Activated CD8-positive, alpha-beta T cell treated with anti-CD3 and anti-CD28 coated beads for 36 hours (primary cell): ENCODE measurements at regions of chr4 and their contacts with region 1.

Region 1: GRCh38 chr4:74858929-74859562 is 64.7 kb upstream of the BTC start:
- DNase-seq: no peak
- ATAC-seq: no peak
- H3K4me3 Mint-ChIP-seq: no peak overlapping the region
- H3K27ac Mint-ChIP-seq: no peak overlapping the region
- H3K4me1 Mint-ChIP-seq: no peaks in the 10 kb centered on the region
- H3K27me3 Mint-ChIP-seq: no peaks in the 10 kb centered on the region
- CTCF ChIP-seq: no peak

Region 2: DNA sequence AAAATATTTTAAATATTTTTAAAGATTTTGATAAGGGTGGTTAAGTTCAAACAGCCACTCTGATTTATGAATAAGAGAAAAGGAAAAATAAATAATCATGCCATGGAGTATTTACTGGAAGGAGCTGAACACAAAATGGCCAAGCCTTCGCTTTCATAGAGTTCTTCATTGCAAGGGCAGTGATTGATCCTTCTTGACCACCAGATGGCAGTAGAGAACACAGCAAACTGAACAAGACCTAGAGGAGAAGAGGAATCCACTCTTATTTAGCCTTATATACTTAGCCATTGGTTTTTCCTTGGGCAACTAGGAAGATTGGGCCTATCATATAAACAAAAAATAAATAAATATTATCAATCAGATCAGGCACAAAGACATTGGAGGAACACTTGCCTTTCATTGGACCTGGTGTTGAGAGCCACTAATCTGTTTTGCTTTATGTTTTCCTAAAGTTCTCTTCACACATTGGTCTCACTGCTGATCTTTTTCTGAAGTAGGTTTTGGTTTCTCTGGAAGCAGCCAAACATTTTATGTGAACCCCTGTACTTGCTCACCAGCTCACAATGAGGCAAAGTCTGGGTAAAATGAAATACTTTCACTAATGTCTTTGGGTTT is 15.8 kb after region 1 on chr4:
- CTCF ChIA-PET with region 1: interaction called, 21 read pairs
- POLR2A ChIA-PET with region 1: no interaction called
- intact Hi-C with region 1: no loop called
- DNase-seq: peak; percentile 4
- ATAC-seq: no peak
- H3K4me3 Mint-ChIP-seq: no peak overlapping the region
- H3K27ac Mint-ChIP-seq: no peak overlapping the region
- H3K4me1 Mint-ChIP-seq: no peaks in the 10 kb centered on the region
- H3K27me3 Mint-ChIP-seq: peaks cover 8% of the 10 kb centered on the region
- CTCF ChIP-seq: peak; percentile 74

Region 3: DNA sequence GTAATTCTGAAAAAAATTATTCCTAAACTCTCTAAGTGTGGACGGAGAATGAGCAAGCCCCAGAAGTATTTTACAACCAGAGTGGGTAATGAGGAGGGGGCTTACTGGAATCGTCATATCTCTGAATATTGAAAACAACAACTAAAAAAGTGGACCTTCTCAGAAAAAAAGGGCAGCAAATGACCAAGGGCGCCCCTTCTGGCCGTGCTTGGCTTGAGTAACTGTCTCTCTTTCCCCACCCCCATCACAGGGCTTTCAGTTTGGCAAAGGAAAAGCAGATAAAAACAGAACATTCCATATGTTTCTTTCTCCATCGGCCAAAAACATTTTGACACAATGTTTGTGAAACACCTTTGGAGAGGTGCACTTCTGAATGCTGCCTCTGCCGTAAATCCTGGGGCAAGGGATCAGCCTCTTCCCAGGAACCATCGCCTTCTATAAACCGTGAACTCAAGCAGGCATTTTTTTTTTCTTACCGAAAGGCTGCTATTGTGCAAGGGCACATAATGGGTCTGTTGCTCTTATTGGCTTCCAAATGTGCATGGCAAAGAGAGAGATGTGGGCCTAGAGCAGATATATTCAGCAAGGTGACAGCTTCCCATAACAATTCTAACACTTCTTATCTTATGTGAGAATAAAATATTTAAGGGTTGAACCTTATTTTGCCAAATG is 189.3 kb after region 1 on chr4:
- CTCF ChIA-PET with region 1: no interaction called
- POLR2A ChIA-PET with region 1: no interaction called
- intact Hi-C with region 1: no loop called
- DNase-seq: no peak
- ATAC-seq: no peak
- H3K4me3 Mint-ChIP-seq: no peak overlapping the region
- H3K27ac Mint-ChIP-seq: no peak overlapping the region
- H3K4me1 Mint-ChIP-seq: no peaks in the 10 kb centered on the region
- H3K27me3 Mint-ChIP-seq: peaks cover 2% of the 10 kb centered on the region
- CTCF ChIP-seq: no peak